Endothelial cell of umbilical vein (primary cell): ENCODE measurements at regions of chr9 and their contacts with region 1.

Region 1: GRCh38 chr9:92634712-92635605 is 35.0 kb downstream of the IPPK start:
- DNase-seq: peak; percentile 78
- H3K4me3 ChIP-seq: no peak overlapping the region
- H3K27ac ChIP-seq: no peak overlapping the region
- H3K4me1 ChIP-seq: no peaks in the 10 kb centered on the region
- H3K27me3 ChIP-seq: no peaks in the 10 kb centered on the region
- CTCF ChIP-seq: peak; percentile 98
- POLR2A ChIP-seq: no peak

Region 2: GRCh38 chr9:92254381-92255337 is 380.3 kb before region 1 on chr9:
- CTCF ChIA-PET with region 1: no interaction called
- POLR2A ChIA-PET with region 1: no interaction called
- dilution Hi-C with region 1: no loop called
- intact Hi-C with region 1: loop called (anchors 10 kb)
- DNase-seq: no peak
- H3K4me3 ChIP-seq: no peak overlapping the region
- H3K27ac ChIP-seq: no peak overlapping the region
- H3K4me1 ChIP-seq: no peaks in the 10 kb centered on the region
- H3K27me3 ChIP-seq: no peaks in the 10 kb centered on the region
- CTCF ChIP-seq: no peak
- POLR2A ChIP-seq: no peak

Region 3: GRCh38 chr9:92325269-92325990 is 309.5 kb before region 1 on chr9 and contains the starts of genes CENPP and NOL8:
- CTCF ChIA-PET with region 1: interaction called, 20 read pairs
- POLR2A ChIA-PET with region 1: no interaction called
- dilution Hi-C with region 1: no loop called
- intact Hi-C with region 1: loop called (anchors 1 kb)
- DNase-seq: peak; percentile 93
- H3K4me3 ChIP-seq: peak within 1 kb of the TSS; percentile 32 to 91 (median 67)
- H3K27ac ChIP-seq: peak within 1 kb of the TSS; percentile 89
- H3K4me1 ChIP-seq: peaks cover 13% of the 10 kb centered on the region
- H3K27me3 ChIP-seq: no peaks in the 10 kb centered on the region
- CTCF ChIP-seq: no peak
- POLR2A ChIP-seq: peak; percentile 85
- total RNA-seq, gene CENPP: 8.7 and 12.0 TPM in 2 replicates
- total RNA-seq, gene NOL8: 36.1 and 41.6 TPM in 2 replicates

Region 4: GRCh38 chr9:92438900-92439526 is 195.9 kb before region 1 on chr9:
- CTCF ChIA-PET with region 1: interaction called, 3 read pairs
- POLR2A ChIA-PET with region 1: no interaction called
- dilution Hi-C with region 1: no loop called
- intact Hi-C with region 1: loop called (anchors 2 kb)
- DNase-seq: peak; percentile 38
- H3K4me3 ChIP-seq: no peak overlapping the region
- H3K27ac ChIP-seq: no peak overlapping the region
- H3K4me1 ChIP-seq: no peaks in the 10 kb centered on the region
- H3K27me3 ChIP-seq: no peaks in the 10 kb centered on the region
- CTCF ChIP-seq: no peak
- POLR2A ChIP-seq: no peak

Region 5: DNA sequence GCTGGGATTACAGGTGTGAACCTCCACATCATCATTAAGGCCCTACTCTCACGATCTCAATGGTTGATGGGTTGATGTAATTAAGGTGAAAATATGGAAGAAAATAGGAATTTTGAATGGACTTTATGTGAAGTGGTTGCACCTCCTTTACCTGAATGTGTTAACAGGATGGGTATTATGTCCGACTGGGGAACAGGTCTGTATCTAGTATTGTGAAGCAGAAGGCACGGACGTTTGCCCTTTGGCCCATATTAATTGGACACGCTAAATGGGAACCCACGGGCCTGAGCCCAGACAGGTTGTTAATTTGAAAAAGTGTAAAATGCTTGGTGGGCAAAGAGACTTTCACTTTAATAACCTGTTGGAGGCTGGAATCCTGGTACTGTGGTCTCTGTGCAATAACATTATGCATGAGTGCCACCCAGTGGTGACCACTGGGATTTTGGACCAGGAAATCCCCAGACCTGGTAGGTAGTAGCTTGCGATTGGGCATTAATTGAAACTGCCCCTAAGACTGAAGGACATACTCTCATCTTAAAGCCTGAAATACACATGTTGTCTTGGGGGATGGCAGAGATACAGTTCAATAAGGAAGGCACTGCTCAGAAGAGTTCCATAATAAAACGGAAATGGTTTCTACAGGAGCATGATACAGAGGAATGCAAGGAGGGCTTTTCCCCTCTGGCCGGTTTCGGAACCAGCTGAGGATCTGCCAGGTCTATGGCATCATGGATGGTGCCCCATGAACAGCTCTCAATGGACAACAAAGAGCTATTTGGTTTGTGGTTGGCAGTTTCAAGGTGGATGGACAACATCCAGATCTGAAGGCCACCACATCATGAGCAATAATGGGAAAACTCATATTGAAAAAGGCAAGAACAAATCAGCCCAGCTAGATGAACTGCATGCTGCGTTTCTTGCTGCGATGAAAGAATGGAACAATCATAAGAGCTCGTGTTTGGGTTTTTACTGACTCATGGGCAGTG is 155.9 kb after region 1 on chr9:
- CTCF ChIA-PET with region 1: interaction called, 3 read pairs
- POLR2A ChIA-PET with region 1: no interaction called
- dilution Hi-C with region 1: no loop called
- intact Hi-C with region 1: loop called (anchors 1 kb)
- DNase-seq: peak; percentile 84
- H3K4me3 ChIP-seq: no peak overlapping the region
- H3K27ac ChIP-seq: no peak overlapping the region
- H3K4me1 ChIP-seq: no peaks in the 10 kb centered on the region
- H3K27me3 ChIP-seq: peaks cover 4 to 8% of the 10 kb centered on the region in 2 experiments
- CTCF ChIP-seq: peak; percentile 68 to 73
- POLR2A ChIP-seq: no peak